Activated CD4-positive, alpha-beta T cell treated with anti-CD3 and anti-CD28 coated beads, Interleukin-2, amount 10 ng/mL, durations not matched to agents 24 days and 14 days (primary cell): ENCODE measurements at regions of chr12 and their contacts with region 1.

Region 1: DNA sequence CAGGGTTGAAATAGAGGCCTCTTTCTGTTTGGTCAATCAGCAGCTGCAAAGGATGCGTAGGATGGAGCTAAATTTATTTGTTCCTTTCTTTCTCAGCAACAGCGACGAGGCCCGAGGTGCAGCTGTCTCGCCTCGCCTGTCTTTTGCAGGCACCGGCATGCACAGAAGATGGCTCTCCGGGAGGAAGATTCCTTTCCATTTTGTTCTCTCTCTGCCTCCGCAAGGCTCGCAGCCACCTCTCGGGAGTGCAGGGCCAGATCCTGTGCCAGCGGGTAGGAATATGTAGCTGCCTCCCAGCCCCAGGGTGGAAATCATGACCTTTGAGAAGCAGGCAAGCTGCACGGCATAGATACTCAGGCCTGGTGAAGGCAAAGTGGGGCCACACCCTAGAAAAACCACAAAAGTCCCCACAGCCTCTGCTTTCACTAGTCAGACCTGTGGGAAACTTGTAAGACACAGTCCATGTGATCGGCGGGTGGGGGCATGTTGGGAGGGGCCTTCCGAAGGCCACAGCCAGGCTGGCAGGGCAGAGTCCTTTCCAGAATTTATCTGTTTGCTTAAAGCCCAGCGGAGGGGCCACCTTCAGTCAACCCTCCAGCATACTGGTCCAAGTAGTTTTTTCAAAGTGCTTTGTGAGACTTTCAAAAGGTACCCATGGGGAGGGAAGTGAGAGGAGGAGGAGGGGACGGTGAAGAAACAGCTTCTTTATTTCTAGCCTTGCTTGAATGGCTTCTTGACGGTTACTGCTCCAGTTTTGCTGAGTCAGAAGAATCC is at the start of gene MAP1LC3B2:
- DNase-seq: peak; percentile 95
- H3K4me3 Mint-ChIP-seq: peak within 1 kb of the TSS; percentile 82
- H3K27ac Mint-ChIP-seq: peak within 1 kb of the TSS; percentile 97
- H3K4me1 Mint-ChIP-seq: peaks cover 37% of the 10 kb centered on the region
- H3K27me3 Mint-ChIP-seq: peaks cover 9% of the 10 kb centered on the region
- total RNA-seq, gene MAP1LC3B2: 0.68 TPM in 1 of 2 replicates, not detected in the other

Region 2: GRCh38 chr12:116135209-116135930 is 424.0 kb before region 1 on chr12:
- intact Hi-C with region 1: loop called (anchors 1 kb)
- DNase-seq: no peak
- H3K4me3 Mint-ChIP-seq: peak overlapping the region; percentile 25
- H3K27ac Mint-ChIP-seq: peak overlapping the region; percentile 98
- H3K4me1 Mint-ChIP-seq: peaks cover 59% of the 10 kb centered on the region
- H3K27me3 Mint-ChIP-seq: no peaks in the 10 kb centered on the region

Region 3: GRCh38 chr12:116277393-116278278 is 281.7 kb before region 1 on chr12 and contains the start of gene MED13L:
- intact Hi-C with region 1: loop called (anchors 2 kb)
- DNase-seq: peak; percentile 96
- H3K4me3 Mint-ChIP-seq: peak within 1 kb of the TSS; percentile 95
- H3K27ac Mint-ChIP-seq: peak within 1 kb of the TSS; percentile 90
- H3K4me1 Mint-ChIP-seq: peaks cover 43% of the 10 kb centered on the region
- H3K27me3 Mint-ChIP-seq: peaks cover 1% of the 10 kb centered on the region
- total RNA-seq, gene MED13L: 55.1 and 62.9 TPM in 2 replicates

Region 4: GRCh38 chr12:116533343-116534251 is 25.8 kb before region 1 on chr12:
- intact Hi-C with region 1: loop called (anchors 1 kb)
- DNase-seq: peak; percentile 92
- H3K4me3 Mint-ChIP-seq: peak overlapping the region; percentile 91
- H3K27ac Mint-ChIP-seq: peak overlapping the region; percentile 67
- H3K4me1 Mint-ChIP-seq: peaks cover 37% of the 10 kb centered on the region
- H3K27me3 Mint-ChIP-seq: peaks cover 9% of the 10 kb centered on the region

Region 5: DNA sequence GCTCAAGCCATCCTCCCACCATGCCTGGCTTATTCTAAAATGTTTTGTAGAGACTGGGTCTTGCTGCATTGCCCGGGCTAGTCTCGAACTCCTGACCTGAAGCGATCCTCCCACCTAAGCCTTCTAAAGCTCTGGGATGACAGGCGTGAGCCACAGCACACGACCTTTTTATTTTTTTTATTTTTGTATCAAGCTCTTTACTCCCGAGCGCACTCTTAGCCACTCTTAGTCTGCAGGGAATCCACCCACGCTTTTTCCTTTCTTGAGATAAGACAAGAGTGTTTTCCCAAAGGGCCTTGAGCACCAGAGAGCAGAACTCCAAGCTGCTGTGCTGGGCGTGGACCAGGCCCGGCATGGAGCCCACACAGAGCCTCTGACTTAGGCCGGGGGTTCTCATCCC is 23.3 kb after region 1 on chr12:
- intact Hi-C with region 1: no loop called
- DNase-seq: no peak
- H3K4me3 Mint-ChIP-seq: no peak overlapping the region
- H3K27ac Mint-ChIP-seq: no peak overlapping the region
- H3K4me1 Mint-ChIP-seq: peaks cover 2% of the 10 kb centered on the region
- H3K27me3 Mint-ChIP-seq: peaks cover 15% of the 10 kb centered on the region

Region 6: DNA sequence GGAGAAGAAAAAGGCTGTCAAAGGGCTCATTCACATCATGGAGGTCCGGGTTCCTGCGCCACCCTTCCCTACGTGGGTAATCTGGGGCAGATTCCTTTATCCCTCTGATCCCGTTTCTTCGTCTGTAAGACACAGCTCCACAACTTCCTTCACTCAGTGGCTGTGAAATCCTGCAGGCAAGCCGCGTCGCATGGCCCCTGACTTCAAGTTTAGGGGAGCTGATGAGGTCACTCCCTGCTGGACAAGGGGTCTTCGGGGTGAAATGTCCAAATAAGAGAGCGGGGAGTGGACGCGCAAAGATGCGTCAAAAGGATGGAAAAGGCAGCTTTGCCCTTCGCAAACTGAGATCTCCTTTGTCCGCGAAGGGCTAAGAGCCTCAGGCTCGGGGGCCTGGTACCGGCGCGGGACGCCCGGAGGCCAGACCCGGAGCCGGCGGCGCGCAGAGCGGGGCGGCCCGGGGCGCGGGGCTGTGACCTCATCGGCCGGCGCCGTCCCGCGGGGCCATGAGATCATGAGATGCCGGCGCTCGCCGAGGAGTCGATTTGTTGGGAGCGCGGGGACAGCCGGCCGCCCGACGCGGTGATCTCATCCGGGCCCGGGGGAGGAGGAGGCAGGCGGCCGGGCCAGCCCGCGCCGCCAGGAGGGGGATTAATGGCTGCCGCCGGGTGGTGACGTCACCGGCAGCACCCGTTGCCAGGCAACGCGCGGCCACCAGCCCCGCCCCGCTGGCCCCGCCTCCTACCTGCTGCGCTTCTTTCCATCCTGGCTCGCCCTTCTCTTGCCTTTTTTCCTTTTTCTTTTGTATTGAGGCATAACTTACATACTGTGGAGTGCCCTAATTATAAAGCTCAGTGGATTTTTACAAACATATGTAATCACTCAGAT is 259.8 kb after region 1 on chr12:
- intact Hi-C with region 1: loop called (anchors 2 kb)
- DNase-seq: peak; percentile 97
- H3K4me3 Mint-ChIP-seq: peak overlapping the region; percentile 96
- H3K27ac Mint-ChIP-seq: peak overlapping the region; percentile 98
- H3K4me1 Mint-ChIP-seq: peaks cover 22% of the 10 kb centered on the region
- H3K27me3 Mint-ChIP-seq: peaks cover 12% of the 10 kb centered on the region